ENCODE measurements at regions of chr9 and their contacts with region 1.

Region 1: GRCh38 chr9:79571309-79572031 is at the start of gene TLE4:
- DNase-seq: peak; percentile 96 to 100 (median 100)
- ATAC-seq: peak; percentile 90
- H3K4me3 ChIP-seq: peak within 1 kb of the TSS; percentile 95
- H3K4me3 Mint-ChIP-seq: peak within 1 kb of the TSS in 7 of 10 donors; percentile 59 to 91 (median 78)
- H3K27ac ChIP-seq: peak within 1 kb of the TSS; percentile 87
- H3K27ac Mint-ChIP-seq: peak within 1 kb of the TSS in 4 of 9 donors; percentile 52 to 74 (median 68)
- H3K4me1 ChIP-seq: peaks cover 17 to 19% of the 10 kb centered on the region in 2 donors
- H3K4me1 Mint-ChIP-seq: peaks cover 22 to 40% (median 32%) of the 10 kb centered on the region in 7 donors
- H3K27me3 ChIP-seq: no peaks in the 10 kb centered on the region
- H3K27me3 Mint-ChIP-seq: peaks cover 0 to 34% (median 5%) of the 10 kb centered on the region in 5 donors
- total RNA-seq, gene TLE4: 21.0 to 196 (median 106) TPM

Region 2: DNA sequence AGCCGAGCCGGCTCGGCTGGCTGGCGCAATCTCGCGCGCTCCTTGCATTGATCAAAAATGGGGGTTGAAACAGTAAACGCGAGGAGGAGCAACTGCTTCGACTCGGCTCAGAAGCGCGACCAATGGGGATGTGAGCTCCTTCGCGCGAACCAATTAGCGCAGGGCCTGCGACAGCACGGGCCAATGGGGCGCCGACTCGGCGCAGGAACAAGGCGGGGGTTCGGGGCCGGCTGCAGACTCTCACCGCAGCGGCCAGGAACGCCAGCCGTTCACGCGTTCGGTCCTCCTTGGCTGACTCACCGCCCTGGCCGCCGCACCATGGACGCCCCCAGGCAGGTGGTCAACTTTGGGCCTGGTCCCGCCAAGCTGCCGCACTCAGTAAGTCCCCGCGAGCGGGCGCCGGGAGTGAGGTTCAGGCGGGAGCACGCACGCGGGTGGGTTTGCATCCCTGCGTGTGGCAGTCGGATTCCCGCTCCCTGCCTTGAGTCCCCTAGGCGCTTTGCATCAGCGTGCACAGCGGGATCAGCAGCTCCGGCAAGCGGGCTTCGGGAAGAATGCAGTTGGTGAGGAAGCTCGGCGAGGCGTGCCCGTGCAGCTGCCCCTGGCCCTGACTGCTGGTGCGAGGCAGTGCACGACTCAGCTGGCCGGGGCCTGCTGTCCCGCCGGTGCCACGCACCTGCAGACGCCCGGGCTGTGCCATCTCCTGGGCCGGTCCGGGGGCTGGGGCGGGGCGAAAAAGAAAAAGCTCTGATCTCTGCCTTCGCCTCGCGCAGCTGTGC is 1274.4 kb before region 1 on chr9 and contains the start of gene PSAT1:
- CTCF ChIA-PET with region 1: no interaction called
- POLR2A ChIA-PET with region 1: no interaction called
- intact Hi-C with region 1: loop called (anchors 1 to 2 kb)
- DNase-seq: peak; percentile 69 to 91 (median 88)
- ATAC-seq: peak; percentile 99
- H3K4me3 ChIP-seq: peak within 1 kb of the TSS; percentile 86
- H3K4me3 Mint-ChIP-seq: peak within 1 kb of the TSS; percentile 86 to 95 (median 92)
- H3K27ac ChIP-seq: peak within 1 kb of the TSS; percentile 56
- H3K27ac Mint-ChIP-seq: peak within 1 kb of the TSS; percentile 60 to 95 (median 81)
- H3K4me1 ChIP-seq: peaks cover 4 to 8% of the 10 kb centered on the region in 2 donors
- H3K4me1 Mint-ChIP-seq: peaks cover 21 to 59% (median 44%) of the 10 kb centered on the region in 7 donors
- H3K27me3 ChIP-seq: no peaks in the 10 kb centered on the region
- H3K27me3 Mint-ChIP-seq: peaks cover 0 to 5% (median 0%) of the 10 kb centered on the region in 5 donors
- total RNA-seq, gene PSAT1: 1.6 to 65.2 (median 9.5) TPM

Region 3: DNA sequence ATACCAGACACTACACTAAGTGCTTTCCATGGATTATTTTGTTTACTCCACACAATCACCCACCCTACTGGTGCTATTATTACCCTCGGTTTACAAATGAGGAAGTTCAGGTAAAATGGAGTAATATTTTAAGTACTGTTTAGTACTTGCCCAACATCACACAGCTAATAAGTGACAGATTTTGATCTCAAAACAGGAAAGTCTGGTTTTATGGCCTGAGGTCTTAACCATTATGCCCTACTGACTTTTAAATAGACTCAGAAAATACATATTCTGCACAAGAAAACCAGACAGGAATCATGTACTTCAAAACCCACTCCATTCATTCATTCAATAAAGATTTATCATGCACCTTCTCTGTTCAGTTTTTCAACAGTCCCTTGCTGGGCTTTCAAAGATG is 430.7 kb before region 1 on chr9:
- CTCF ChIA-PET with region 1: no interaction called
- POLR2A ChIA-PET with region 1: no interaction called
- intact Hi-C with region 1: no loop called
- DNase-seq: no peak
- ATAC-seq: no peak
- H3K4me3 ChIP-seq: no peak overlapping the region
- H3K4me3 Mint-ChIP-seq: no peak overlapping the region
- H3K27ac ChIP-seq: no peak overlapping the region
- H3K27ac Mint-ChIP-seq: no peak overlapping the region
- H3K4me1 ChIP-seq: no peaks in the 10 kb centered on the region
- H3K4me1 Mint-ChIP-seq: no peaks in the 10 kb centered on the region
- H3K27me3 ChIP-seq: no peaks in the 10 kb centered on the region
- H3K27me3 Mint-ChIP-seq: no peaks in the 10 kb centered on the region

Region 4: GRCh38 chr9:79471580-79472543 is 99.6 kb before region 1 on chr9:
- CTCF ChIA-PET with region 1: interaction called, 3 read pairs
- POLR2A ChIA-PET with region 1: no interaction called
- intact Hi-C with region 1: loop called in 1 of 2 experiments (anchors 5 kb)
- DNase-seq: peak in 6 of 9 donors; percentile 12 to 43 (median 18)
- ATAC-seq: peak; percentile 56
- H3K4me3 ChIP-seq: no peak overlapping the region
- H3K4me3 Mint-ChIP-seq: no peak overlapping the region
- H3K27ac ChIP-seq: no peak overlapping the region
- H3K27ac Mint-ChIP-seq: peak overlapping the region in 3 of 9 donors; percentile 44 to 75 (median 45)
- H3K4me1 ChIP-seq: peaks cover 0 to 8% of the 10 kb centered on the region in 2 donors
- H3K4me1 Mint-ChIP-seq: peaks cover 0 to 30% (median 24%) of the 10 kb centered on the region in 7 donors
- H3K27me3 ChIP-seq: no peaks in the 10 kb centered on the region
- H3K27me3 Mint-ChIP-seq: no peaks in the 10 kb centered on the region

Region 5: GRCh38 chr9:79583952-79584654 is 12.6 kb after region 1 on chr9:
- CTCF ChIA-PET with region 1: interaction called, 11 read pairs
- POLR2A ChIA-PET with region 1: interaction called, 45 read pairs
- intact Hi-C with region 1: loop called in 1 of 2 experiments (anchors 1 kb)
- DNase-seq: no peak
- ATAC-seq: peak; percentile 84
- H3K4me3 ChIP-seq: peak overlapping the region; percentile 10
- H3K4me3 Mint-ChIP-seq: peak overlapping the region in 9 of 10 donors; percentile 39 to 76 (median 63)
- H3K27ac ChIP-seq: no peak overlapping the region
- H3K27ac Mint-ChIP-seq: peak overlapping the region in 6 of 9 donors; percentile 1 to 89 (median 26)
- H3K4me1 ChIP-seq: peaks cover 45 to 47% of the 10 kb centered on the region in 2 donors
- H3K4me1 Mint-ChIP-seq: peaks cover 50 to 93% (median 85%) of the 10 kb centered on the region in 7 donors
- H3K27me3 ChIP-seq: no peaks in the 10 kb centered on the region
- H3K27me3 Mint-ChIP-seq: peaks cover 0 to 2% (median 0%) of the 10 kb centered on the region in 5 donors

Region 6: DNA sequence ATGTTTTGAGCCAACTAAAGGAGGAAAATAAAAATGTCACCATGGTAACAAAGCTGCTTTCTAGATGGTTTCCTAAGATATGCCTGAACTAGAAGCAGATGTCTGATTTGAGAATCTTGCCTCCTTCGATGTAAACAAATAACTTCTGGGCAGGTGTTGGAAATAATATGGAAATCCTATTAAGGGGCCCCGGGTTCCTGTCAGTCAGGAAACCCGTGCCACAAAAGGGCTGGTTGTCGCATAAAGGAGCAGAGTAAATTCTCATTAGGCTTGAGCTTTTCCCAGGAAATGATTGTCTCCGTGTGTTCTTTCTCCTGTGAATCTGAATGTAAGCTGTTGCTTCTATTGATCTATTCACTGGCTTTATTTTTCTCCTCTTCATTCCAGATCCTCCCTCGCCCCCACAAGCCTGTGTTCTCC is 91.1 kb after region 1 on chr9:
- CTCF ChIA-PET with region 1: no interaction called
- POLR2A ChIA-PET with region 1: interaction called, 6 read pairs
- intact Hi-C with region 1: loop called in 1 of 2 experiments (anchors 1 kb)
- DNase-seq: peak in 4 of 9 donors; percentile 3 to 36 (median 18)
- ATAC-seq: no peak
- H3K4me3 ChIP-seq: no peak overlapping the region
- H3K4me3 Mint-ChIP-seq: peak overlapping the region in 3 of 10 donors; percentile 12 to 34 (median 27)
- H3K27ac ChIP-seq: no peak overlapping the region
- H3K27ac Mint-ChIP-seq: peak overlapping the region in 8 of 9 donors; percentile 19 to 79 (median 52)
- H3K4me1 ChIP-seq: peaks cover 5 to 9% of the 10 kb centered on the region in 2 donors
- H3K4me1 Mint-ChIP-seq: peaks cover 15 to 77% (median 39%) of the 10 kb centered on the region in 7 donors
- H3K27me3 ChIP-seq: no peaks in the 10 kb centered on the region
- H3K27me3 Mint-ChIP-seq: no peaks in the 10 kb centered on the region

Region 7: GRCh38 chr9:79812507-79813257 is 241.2 kb after region 1 on chr9:
- CTCF ChIA-PET with region 1: no interaction called
- POLR2A ChIA-PET with region 1: no interaction called
- intact Hi-C with region 1: loop called in 1 of 2 experiments (anchors 5 kb)
- DNase-seq: peak in 4 of 9 donors; percentile 2 to 8 (median 4)
- ATAC-seq: peak; percentile 65
- H3K4me3 ChIP-seq: peak overlapping the region; percentile 27
- H3K4me3 Mint-ChIP-seq: peak overlapping the region; percentile 37 to 95 (median 83)
- H3K27ac ChIP-seq: peak overlapping the region; percentile 14
- H3K27ac Mint-ChIP-seq: peak overlapping the region in 8 of 9 donors; percentile 35 to 83 (median 68)
- H3K4me1 ChIP-seq: peaks cover 0 to 9% of the 10 kb centered on the region in 2 donors
- H3K4me1 Mint-ChIP-seq: peaks cover 17 to 46% (median 31%) of the 10 kb centered on the region in 7 donors
- H3K27me3 ChIP-seq: no peaks in the 10 kb centered on the region
- H3K27me3 Mint-ChIP-seq: peaks cover 0 to 8% (median 0%) of the 10 kb centered on the region in 5 donors

Region 8: DNA sequence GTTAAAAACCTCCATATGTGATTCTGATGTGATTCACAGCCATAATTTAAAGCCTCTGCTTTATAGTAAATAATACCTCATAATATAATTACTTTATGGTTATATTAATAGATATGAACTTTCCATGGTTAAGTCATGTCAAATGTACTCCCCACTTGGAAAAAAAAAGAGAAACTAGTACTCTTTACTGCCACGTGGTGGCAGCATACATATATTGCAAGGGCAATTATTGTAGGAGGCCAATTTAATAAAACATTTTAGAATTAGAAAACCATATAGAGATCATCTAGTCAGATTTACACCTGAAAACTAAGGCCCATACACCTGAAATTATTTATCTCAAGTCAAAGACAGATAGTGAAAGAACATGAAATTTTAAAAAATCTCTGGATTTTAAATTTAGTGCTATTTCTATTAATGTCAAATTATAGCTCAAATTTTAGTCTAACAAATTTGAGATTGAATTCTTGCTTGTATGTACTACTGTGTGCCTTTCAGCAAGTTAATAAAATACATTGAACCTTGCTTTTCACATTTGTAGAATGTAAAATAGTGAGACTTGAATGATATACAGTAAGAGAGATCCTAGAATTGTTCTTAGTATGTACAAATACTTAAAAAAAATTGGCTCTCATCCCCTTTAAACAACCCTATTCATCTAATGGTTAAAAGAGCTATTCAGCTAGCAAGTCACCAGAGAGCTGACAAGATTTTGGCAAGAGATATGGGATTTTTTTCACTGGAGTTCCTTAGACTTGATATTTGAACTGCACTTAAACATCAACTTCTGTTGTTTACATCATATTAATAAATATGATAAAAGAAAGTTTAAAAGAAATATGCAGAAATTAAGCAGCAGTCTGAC is 604.0 kb after region 1 on chr9:
- CTCF ChIA-PET with region 1: no interaction called
- POLR2A ChIA-PET with region 1: no interaction called
- intact Hi-C with region 1: loop called in 1 of 2 experiments (anchors 5 kb)
- DNase-seq: peak in 5 of 9 donors; percentile 4 to 25 (median 10)
- ATAC-seq: no peak
- H3K4me3 ChIP-seq: no peak overlapping the region
- H3K4me3 Mint-ChIP-seq: no peak overlapping the region
- H3K27ac ChIP-seq: no peak overlapping the region
- H3K27ac Mint-ChIP-seq: no peak overlapping the region
- H3K4me1 ChIP-seq: no peaks in the 10 kb centered on the region
- H3K4me1 Mint-ChIP-seq: no peaks in the 10 kb centered on the region
- H3K27me3 ChIP-seq: no peaks in the 10 kb centered on the region
- H3K27me3 Mint-ChIP-seq: peaks cover 0 to 7% (median 6%) of the 10 kb centered on the region in 5 donors

Measured in naive thymus-derived CD4-positive, alpha-beta T cell (primary cell).